Activated CD4-positive, alpha-beta memory T cell treated with anti-CD3 and anti-CD28 coated beads, Interleukin-2, amount 10 ng/mL, durations not matched to agents 7 days and 5 days (primary cell): ENCODE measurements at regions of chr21 and their contacts with region 1.

Region 1: DNA sequence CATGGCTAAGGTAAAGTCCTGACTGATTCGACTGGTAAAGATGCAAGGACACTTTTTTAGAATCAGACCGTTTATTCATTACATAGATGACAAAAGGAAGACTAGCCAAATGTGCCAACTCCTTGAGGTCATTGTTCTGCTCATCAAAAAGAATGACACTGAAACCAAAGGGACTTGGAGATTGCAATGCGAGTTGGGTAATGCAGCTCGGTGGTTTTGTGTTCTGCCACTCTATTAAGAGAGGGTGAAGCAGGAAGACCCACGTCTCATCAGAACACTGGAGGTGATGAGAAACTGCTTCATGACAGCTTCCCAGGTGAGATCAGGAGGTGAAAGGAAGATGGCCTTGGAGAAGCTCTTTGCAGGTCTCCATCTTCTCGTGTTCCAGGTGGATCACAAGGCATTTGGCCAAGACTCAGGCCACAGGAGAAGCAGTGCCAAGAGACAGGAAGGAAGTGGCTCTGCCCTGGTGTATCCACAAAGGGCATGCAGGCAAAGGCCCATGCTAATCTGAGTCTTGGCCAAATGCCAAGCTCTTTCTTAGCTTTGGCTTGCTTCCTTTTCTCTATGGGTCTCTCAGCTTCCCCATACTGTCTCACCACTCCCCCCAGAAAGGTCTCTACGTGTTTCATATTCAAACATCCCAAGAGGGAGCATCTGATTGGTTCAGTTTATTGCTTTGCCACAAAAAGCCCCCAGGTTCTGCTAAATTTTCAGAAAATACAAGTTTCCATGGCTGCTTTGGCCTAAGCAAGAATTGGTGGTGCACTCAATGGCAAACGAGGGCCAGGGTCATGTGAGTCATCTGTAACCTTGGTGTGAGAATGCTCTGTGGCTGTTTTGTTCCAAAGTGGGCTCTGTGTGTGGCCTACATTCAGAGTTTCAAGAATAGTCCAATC is 5.7 kb upstream of the CCT8 start:
- DNase-seq: peak; percentile 42
- H3K4me3 Mint-ChIP-seq: peak overlapping the region; percentile 21
- H3K27ac Mint-ChIP-seq: peak overlapping the region; percentile 82
- H3K4me1 Mint-ChIP-seq: peaks cover 56% of the 10 kb centered on the region
- H3K27me3 Mint-ChIP-seq: no peaks in the 10 kb centered on the region

Region 2: GRCh38 chr21:29002442-29003144 is 76.5 kb before region 1 on chr21:
- CTCF ChIA-PET with region 1: no interaction called
- POLR2A ChIA-PET with region 1: interaction called, 26 read pairs
- DNase-seq: peak; percentile 96
- H3K4me3 Mint-ChIP-seq: peak overlapping the region; percentile 86
- H3K27ac Mint-ChIP-seq: peak overlapping the region; percentile 93
- H3K4me1 Mint-ChIP-seq: peaks cover 13% of the 10 kb centered on the region
- H3K27me3 Mint-ChIP-seq: no peaks in the 10 kb centered on the region